Vagina (tissue), 2 donors: ENCODE measurements at regions of chr17 and their contacts with region 1.

Region 1: DNA sequence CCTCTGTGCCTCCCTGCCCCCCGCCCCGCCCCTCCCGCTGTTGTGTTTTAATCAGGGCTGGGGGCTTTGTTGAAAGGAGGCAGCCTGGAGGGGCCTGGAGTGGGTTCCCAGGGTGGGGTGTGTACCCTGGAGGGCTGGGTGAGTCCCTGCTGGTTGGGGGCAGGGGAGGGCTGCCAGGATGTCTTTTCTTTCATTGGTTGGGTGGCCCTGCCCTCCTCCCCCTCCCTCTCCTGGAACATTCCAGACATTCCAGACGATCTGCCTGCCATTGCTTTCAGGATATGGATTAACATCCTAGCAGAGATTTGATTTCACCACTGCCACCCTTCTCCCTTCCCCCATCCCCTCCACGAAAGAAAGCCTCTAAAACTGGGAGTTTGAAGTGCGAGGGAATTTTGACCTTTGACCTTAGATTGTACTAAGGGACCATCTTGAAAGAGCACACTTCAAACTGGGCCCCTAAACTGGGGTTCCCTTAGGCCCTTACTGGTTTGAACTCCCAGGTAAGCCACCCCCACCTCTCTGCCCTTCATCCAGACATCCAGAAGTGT is 25.3 kb downstream of the IGF2BP1 start:
- DNase-seq: no peak
- H3K4me3 ChIP-seq: no peak overlapping the region
- H3K27ac ChIP-seq: no peak overlapping the region
- H3K4me1 ChIP-seq: no peaks in the 10 kb centered on the region
- H3K27me3 ChIP-seq: no peaks in the 10 kb centered on the region
- CTCF ChIP-seq: no peak
- POLR2A ChIP-seq: no peak

Region 2: DNA sequence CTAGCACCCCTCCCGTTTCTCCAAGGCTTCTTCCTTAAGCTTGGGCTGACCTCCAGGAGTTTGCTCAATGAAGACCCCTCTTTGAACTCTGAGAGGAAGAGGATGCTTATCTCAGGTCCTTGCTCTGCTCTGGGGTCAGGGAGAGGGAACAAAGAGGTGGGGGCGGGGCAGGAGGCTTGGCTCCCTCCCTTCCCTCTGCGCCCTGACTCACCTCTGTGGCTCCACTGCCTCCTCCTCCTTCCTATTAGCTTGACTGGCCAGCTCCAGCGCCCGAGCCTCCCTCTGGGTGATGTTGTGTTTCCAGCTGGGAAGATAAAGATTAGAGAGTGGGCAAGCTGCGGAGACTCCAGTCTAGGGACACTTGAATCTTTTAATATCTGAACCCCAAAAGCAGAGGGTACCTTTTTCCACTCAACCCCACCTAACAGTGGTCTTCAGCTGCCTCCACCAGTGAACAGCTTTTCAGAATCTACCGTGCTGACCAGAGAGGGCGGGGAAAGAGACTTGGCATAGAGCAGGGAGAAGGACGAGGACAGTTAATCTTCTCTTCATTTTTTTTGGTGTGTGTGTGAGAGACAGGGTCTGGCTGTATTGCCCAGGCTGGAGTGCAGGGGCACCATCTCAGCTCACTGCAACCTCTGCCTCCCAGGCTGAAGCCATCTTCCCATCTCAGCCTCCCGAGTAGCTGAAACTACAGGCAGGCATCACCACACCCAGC is 60.8 kb before region 1 on chr17:
- intact Hi-C with region 1: loop called (anchors 10 kb)
- DNase-seq: no peak
- H3K4me3 ChIP-seq: no peak overlapping the region
- H3K27ac ChIP-seq: no peak overlapping the region
- H3K4me1 ChIP-seq: no peaks in the 10 kb centered on the region
- H3K27me3 ChIP-seq: no peaks in the 10 kb centered on the region
- CTCF ChIP-seq: no peak
- POLR2A ChIP-seq: no peak

Region 3: DNA sequence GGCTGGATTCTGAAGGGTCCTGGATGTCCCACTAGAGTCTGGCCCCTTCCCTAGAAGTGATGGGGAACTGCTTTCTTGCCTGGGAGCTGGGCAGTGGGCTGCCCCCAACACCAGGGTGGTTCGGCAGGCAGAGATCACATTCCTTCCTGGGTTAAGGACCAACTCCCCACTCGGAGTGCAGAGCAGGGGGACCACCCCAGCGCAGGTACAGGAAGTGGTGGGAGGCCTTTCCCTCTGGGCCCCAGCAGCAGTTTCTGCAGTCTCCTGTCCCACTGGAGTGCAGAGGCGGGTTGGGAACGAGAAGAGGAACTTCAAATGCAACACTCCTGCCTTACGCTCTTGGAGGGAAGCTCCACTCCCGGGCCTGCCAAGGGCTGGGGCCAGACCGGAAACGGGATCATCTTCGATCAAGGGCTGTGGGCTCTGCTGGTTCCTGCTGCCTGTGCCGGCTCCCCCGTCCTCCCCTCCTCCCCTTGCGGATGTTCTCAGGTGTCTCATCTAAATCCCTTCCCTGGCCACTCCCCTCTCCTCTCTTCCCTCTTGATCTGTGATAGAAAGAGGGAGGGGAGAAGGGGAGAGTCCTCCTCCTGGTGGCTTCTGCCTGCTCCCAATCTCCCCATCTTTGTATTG is 463.7 kb after region 1 on chr17:
- intact Hi-C with region 1: no loop called
- DNase-seq: no peak
- H3K4me3 ChIP-seq: no peak overlapping the region
- H3K27ac ChIP-seq: no peak overlapping the region
- H3K4me1 ChIP-seq: no peaks in the 10 kb centered on the region
- H3K27me3 ChIP-seq: no peaks in the 10 kb centered on the region
- CTCF ChIP-seq: no peak
- POLR2A ChIP-seq: no peak